ENCODE measurements at regions of chr5 and their contacts with region 1.

Region 1: GRCh38 chr5:91383027-91383955 is at the start of gene ARRDC3:
- H3K4me3 ChIP-seq: peak within 1 kb of the TSS; percentile 72
- H3K27ac ChIP-seq: peak within 1 kb of the TSS; percentile 71
- H3K4me1 ChIP-seq: peaks cover 6% of the 10 kb centered on the region; the same call in 1 of the 2 replicates
- CTCF ChIP-seq: peak; percentile 38; the same call in 1 of the 2 replicates

Region 2: DNA sequence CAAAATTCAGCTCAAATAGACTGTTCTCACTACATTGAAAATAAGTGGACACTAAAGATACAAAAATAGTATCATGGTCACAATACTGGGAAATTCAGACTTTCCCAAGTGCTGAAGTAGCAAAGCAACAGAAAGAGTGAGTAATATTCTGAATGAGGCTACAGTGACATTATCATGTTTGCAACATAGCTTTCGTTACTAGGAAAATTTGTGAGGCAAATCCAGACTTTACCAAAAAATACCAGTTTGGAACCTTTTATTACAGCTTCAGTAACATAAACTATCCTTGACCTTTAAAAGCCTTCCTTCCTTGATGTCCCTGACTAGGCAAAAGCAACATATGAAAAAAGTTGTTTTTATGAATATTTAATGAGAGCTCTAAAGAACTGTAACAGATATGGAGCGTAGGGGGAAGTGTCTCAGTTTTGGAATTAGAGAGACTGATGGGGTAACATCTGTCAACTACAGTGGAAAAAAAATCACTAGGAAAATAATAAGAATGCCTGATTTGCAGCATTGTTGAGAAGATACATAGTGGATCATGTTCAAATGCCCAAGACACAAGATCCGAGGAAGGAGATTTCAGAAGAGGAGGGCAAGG is 511.8 kb before region 1 on chr5:
- CTCF ChIA-PET with region 1: interaction called, 50 read pairs
- POLR2A ChIA-PET with region 1: interaction called, 3 read pairs
- H3K4me3 ChIP-seq: no peak overlapping the region
- H3K27ac ChIP-seq: no peak overlapping the region
- H3K4me1 ChIP-seq: no peaks in the 10 kb centered on the region
- CTCF ChIP-seq: no peak

Region 3: GRCh38 chr5:90949469-90950358 is 433.6 kb before region 1 on chr5:
- CTCF ChIA-PET with region 1: no interaction called
- POLR2A ChIA-PET with region 1: no interaction called
- H3K4me3 ChIP-seq: no peak overlapping the region
- H3K27ac ChIP-seq: no peak overlapping the region
- H3K4me1 ChIP-seq: no peaks in the 10 kb centered on the region
- CTCF ChIP-seq: no peak

Region 4: GRCh38 chr5:91101600-91102379 is 281.5 kb before region 1 on chr5:
- CTCF ChIA-PET with region 1: interaction called, 71 read pairs
- POLR2A ChIA-PET with region 1: no interaction called
- H3K4me3 ChIP-seq: no peak overlapping the region
- H3K27ac ChIP-seq: no peak overlapping the region
- H3K4me1 ChIP-seq: no peaks in the 10 kb centered on the region
- CTCF ChIP-seq: peak; percentile 68; the same call in 1 of the 2 replicates

Region 5: GRCh38 chr5:91150636-91151035 is 232.7 kb before region 1 on chr5:
- CTCF ChIA-PET with region 1: no interaction called
- POLR2A ChIA-PET with region 1: no interaction called
- H3K4me3 ChIP-seq: no peak overlapping the region
- H3K27ac ChIP-seq: no peak overlapping the region
- H3K4me1 ChIP-seq: peaks cover under 1% of the 10 kb centered on the region; the same call in 1 of the 2 replicates
- CTCF ChIP-seq: no peak

Region 6: GRCh38 chr5:91225848-91226686 is 157.2 kb before region 1 on chr5:
- CTCF ChIA-PET with region 1: interaction called, 56 read pairs
- POLR2A ChIA-PET with region 1: interaction called, 4 read pairs
- H3K4me3 ChIP-seq: no peak overlapping the region
- H3K27ac ChIP-seq: no peak overlapping the region
- H3K4me1 ChIP-seq: no peaks in the 10 kb centered on the region
- CTCF ChIP-seq: 0 out of 2 replicates have a peak, but pooled peaks have one; percentile 41

Region 7: DNA sequence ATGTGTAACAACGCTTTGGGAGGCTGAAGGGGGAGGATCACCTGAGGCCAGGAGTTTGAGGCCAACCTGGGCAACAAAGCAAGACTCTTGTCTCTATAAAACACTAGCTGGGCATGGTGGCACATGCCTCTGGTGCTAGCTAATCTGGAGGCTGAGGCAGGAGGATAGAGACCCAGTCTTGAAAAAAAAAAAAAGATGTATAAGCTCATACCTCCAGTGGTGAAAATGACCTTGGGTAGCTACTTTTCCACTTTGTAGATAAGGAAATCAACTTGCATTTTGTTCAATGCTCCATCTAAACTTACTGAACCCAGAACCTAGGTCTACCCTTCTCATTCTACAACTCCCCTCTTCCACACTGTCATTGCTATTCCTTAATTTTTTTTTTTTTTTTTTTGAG is 16.7 kb before region 1 on chr5:
- CTCF ChIA-PET with region 1: interaction called, 6 read pairs
- POLR2A ChIA-PET with region 1: interaction called, 10 read pairs
- H3K4me3 ChIP-seq: no peak overlapping the region
- H3K27ac ChIP-seq: no peak overlapping the region
- H3K4me1 ChIP-seq: no peaks in the 10 kb centered on the region
- CTCF ChIP-seq: no peak

Region 8: GRCh38 chr5:91456928-91457680 is 73.8 kb after region 1 on chr5:
- CTCF ChIA-PET with region 1: no interaction called
- POLR2A ChIA-PET with region 1: no interaction called
- H3K4me3 ChIP-seq: no peak overlapping the region
- H3K27ac ChIP-seq: no peak overlapping the region
- H3K4me1 ChIP-seq: no peaks in the 10 kb centered on the region
- CTCF ChIP-seq: no peak